Dorsolateral prefrontal cortex (tissue), 120 donors: ENCODE measurements at regions of chr9 and their contacts with region 1.

Region 1: DNA sequence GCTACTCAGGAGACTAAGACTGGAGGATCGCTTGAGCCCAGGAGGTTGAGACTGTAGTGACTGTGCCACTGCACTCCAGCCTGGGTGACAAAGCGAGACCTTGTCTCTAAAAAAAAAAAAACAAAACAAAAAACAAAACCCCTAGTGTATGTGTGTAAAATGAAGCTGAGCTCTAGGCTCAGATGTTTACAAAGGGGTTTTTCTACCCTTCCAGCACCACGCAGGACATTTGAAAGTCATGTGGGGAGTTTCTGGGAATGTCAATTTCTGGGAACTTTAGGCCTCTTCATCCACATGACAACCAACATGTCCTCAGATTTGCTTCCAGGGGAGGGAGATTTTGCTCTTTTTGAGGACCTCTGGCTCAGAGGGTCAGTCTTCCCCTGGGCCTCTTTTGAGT is 42.4 kb upstream of the AIF1L start:
- DNase-seq: peak in 2 of 10 donors; percentile 21 to 53
- H3K4me3 ChIP-seq: no peak overlapping the region
- H3K27ac ChIP-seq: peak overlapping the region in 58 of 59 donors; percentile 71 to 100 (median 90)
- H3K27me3 ChIP-seq: no peaks in the 10 kb centered on the region
- CTCF ChIP-seq: peak in 2 of 56 donors; percentile 18 to 23

Region 2: GRCh38 chr9:130555968-130556367 is 497.9 kb before region 1 on chr9:
- intact Hi-C with region 1: no loop called
- DNase-seq: no peak
- H3K4me3 ChIP-seq: no peak overlapping the region
- H3K27ac ChIP-seq: no peak overlapping the region
- H3K27me3 ChIP-seq: peaks cover 0 to 8% (median 0%) of the 10 kb centered on the region in 45 donors
- CTCF ChIP-seq: no peak

Region 3: DNA sequence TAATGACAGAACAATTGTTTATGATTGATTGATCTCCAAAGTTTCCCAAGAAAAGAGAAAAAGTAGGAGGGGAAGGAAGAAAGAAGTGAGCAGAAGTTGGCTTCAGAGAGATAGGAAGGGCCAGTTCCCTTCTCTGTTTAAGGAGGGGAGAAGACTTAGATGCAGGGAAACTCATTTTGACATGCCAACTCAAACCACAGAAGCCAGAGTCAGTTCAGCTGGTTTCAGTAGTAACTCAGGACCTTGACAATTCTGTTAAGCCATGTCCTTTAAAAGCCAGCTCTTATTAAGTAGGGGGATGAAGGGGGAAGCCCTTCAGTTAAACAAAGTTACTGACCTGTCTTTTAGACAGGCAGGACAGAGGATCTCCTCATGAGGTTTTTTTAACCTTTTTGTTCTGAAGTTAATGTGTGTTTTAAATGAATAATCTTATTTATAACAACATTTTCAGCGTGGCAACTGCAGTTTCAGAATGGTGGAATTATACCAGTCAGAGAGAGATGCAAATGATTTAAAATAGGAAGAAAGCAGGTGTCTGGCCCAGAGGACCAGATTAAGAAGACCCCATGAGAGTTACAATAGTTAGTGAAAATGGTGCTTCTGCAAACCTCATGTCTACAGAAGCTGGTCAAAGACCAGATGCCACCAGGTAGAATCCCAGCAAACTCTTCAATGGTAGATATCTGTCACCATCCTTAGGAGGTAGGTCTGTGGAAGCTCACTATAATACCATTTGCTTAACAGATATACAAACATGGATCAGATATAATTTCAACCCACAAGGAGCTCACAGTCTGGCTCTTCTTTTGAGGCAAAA is 248.2 kb before region 1 on chr9:
- intact Hi-C with region 1: no loop called
- DNase-seq: no peak
- H3K4me3 ChIP-seq: no peak overlapping the region
- H3K27ac ChIP-seq: peak overlapping the region in 1 of 59 donors; percentile 5
- H3K27me3 ChIP-seq: no peaks in the 10 kb centered on the region
- CTCF ChIP-seq: no peak

Region 4: GRCh38 chr9:131096269-131097125 is 42.6 kb after region 1 on chr9 and contains the start of gene AIF1L:
- intact Hi-C with region 1: loop called (anchors 5 kb)
- DNase-seq: peak in 9 of 10 donors; percentile 53 to 81 (median 67)
- H3K4me3 ChIP-seq: peak within 1 kb of the TSS; percentile 53 to 85 (median 72)
- H3K27ac ChIP-seq: peak within 1 kb of the TSS in 58 of 59 donors; percentile 33 to 93 (median 81)
- H3K27me3 ChIP-seq: peaks cover 0 to 51% (median 11%) of the 10 kb centered on the region in 45 donors
- CTCF ChIP-seq: peak in 37 of 56 donors; percentile 12 to 61 (median 37)
- total RNA-seq, gene AIF1L: 23.4 to 303 (median 71.6) TPM

Region 5: GRCh38 chr9:131111854-131112311 is 58.0 kb after region 1 on chr9:
- intact Hi-C with region 1: loop called (anchors 5 kb)
- DNase-seq: peak; percentile 42 to 95 (median 93)
- H3K4me3 ChIP-seq: peak overlapping the region in 30 of 59 donors; percentile 4 to 46 (median 29)
- H3K27ac ChIP-seq: peak overlapping the region; percentile 30 to 99 (median 96)
- H3K27me3 ChIP-seq: peaks cover 0 to 4% (median 0%) of the 10 kb centered on the region in 45 donors
- CTCF ChIP-seq: peak in 23 of 56 donors; percentile 9 to 51 (median 22)

Region 6: GRCh38 chr9:131125128-131126058 is 71.5 kb after region 1 on chr9 and contains the start of gene NUP214:
- intact Hi-C with region 1: loop called in 1 of 2 experiments (anchors 5 kb)
- DNase-seq: peak; percentile 98 to 100 (median 99)
- H3K4me3 ChIP-seq: peak within 1 kb of the TSS; percentile 63 to 100 (median 96)
- H3K27ac ChIP-seq: peak within 1 kb of the TSS in 58 of 59 donors; percentile 17 to 94 (median 81)
- H3K27me3 ChIP-seq: no peaks in the 10 kb centered on the region
- CTCF ChIP-seq: peak in 33 of 56 donors; percentile 5 to 60 (median 35)
- total RNA-seq, gene NUP214: 37.9 to 85.0 (median 52.8) TPM

Region 7: GRCh38 chr9:131178382-131178781 is 124.5 kb after region 1 on chr9:
- intact Hi-C with region 1: loop called in 1 of 2 experiments (anchors 5 kb)
- DNase-seq: peak; percentile 47 to 78 (median 68)
- H3K4me3 ChIP-seq: no peak overlapping the region
- H3K27ac ChIP-seq: no peak overlapping the region
- H3K27me3 ChIP-seq: no peaks in the 10 kb centered on the region
- CTCF ChIP-seq: peak; percentile 67 to 99 (median 94)

Region 8: GRCh38 chr9:131289301-131290038 is 235.6 kb after region 1 on chr9 and contains the start of gene PLPP7:
- intact Hi-C with region 1: loop called in 1 of 2 experiments (anchors 5 kb)
- DNase-seq: peak; percentile 76 to 94 (median 91)
- H3K4me3 ChIP-seq: peak within 1 kb of the TSS; percentile 55 to 86 (median 73)
- H3K27ac ChIP-seq: peak within 1 kb of the TSS; percentile 21 to 97 (median 89)
- H3K27me3 ChIP-seq: no peaks in the 10 kb centered on the region
- CTCF ChIP-seq: peak in 6 of 56 donors; percentile 5 to 39 (median 18)
- total RNA-seq, gene PLPP7: 16.2 to 32.0 (median 24.6) TPM

Region 9: DNA sequence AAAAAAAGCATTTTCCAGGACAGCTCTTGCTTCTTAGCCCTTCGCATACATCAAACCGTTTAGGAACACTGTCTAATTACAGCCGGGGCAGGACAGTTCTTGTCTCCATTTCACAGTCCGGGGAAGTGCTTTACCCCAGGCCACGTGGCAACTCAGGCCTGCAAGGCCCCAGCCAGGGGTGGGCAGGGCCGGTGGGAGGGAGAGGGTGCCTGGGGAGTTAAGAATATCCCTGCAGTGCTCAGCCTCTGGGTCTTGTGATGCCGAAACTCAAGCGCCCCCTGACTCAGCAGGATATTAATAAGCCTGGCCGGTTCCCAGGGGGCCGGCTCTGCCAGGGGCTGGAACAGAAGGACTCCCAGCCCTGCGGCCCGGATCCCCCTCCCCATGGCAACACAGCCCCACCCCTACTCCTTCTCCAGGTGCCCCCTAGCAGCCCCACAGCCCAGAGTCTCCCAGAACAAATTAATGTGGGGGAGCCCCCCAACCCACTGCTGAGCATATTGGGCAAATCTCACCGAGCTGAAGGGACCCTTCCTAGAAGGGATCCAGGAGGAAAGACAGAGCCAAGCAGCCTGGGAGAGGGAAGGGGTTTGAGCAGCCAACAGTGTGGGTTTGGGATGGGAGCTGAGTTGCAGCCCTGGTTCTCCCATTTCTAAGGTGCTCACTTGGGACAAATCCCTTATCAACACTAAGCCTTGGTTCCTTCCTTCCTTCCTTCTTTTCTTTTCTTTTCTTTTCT is 280.9 kb after region 1 on chr9:
- intact Hi-C with region 1: loop called (anchors 2 to 10 kb)
- DNase-seq: peak in 1 of 10 donors; percentile 38
- H3K4me3 ChIP-seq: no peak overlapping the region
- H3K27ac ChIP-seq: no peak overlapping the region
- H3K27me3 ChIP-seq: no peaks in the 10 kb centered on the region
- CTCF ChIP-seq: no peak